ENCODE measurements at regions of chr18 and their contacts with region 1.

Region 1: DNA sequence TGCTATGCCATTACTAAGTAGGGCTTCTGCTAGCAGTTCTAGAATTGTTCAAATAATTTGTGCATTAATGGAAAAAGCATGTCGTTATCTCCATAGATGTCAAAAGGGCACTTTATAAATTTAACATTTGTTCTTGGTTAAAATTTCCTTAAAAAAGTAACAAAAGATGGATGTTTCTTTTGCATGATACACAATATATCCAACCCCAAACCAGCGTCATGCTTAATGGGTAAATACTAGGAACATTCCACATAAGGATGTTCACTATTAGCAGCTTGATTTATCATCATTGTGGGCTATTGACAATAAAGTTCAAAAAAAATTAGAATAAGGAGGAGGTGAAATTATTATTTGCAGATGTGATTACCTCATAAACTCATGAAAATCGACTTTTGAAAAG is 79.7 kb downstream of the GREB1L start:
- DNase-seq: no peak
- ATAC-seq: no peak
- H3K4me3 ChIP-seq: no peak overlapping the region
- H3K4me3 Mint-ChIP-seq: no peak overlapping the region
- H3K27ac ChIP-seq: no peak overlapping the region
- H3K27ac Mint-ChIP-seq: no peak overlapping the region
- H3K4me1 ChIP-seq: no peaks in the 10 kb centered on the region
- H3K4me1 Mint-ChIP-seq: no peaks in the 10 kb centered on the region
- H3K27me3 ChIP-seq: peaks cover 0 to 6% of the 10 kb centered on the region in 2 experiments
- H3K27me3 Mint-ChIP-seq: peaks cover 3 to 10% of the 10 kb centered on the region in 2 donors

Region 2: DNA sequence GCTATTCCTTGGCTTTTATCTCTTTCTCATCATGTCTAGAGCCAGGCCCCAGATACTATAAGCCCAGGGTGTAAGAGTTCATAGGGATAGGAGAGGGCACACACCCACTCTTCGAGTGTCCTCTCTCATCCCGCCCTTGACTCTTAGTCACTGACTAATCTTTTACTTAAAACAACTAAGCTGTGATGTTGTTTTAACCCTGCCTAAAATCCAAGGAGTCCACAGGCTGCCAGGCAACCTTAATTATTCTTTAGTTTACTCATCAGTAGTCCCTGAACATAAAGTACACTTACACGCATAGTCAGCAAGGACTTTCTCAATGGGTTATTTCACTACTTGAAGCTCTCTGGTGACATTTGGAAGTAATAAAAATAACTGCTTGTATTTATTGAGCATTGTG is 51.3 kb before region 1 on chr18:
- CTCF ChIA-PET with region 1: no interaction called
- POLR2A ChIA-PET with region 1: no interaction called
- DNase-seq: no peak
- ATAC-seq: no peak
- H3K4me3 ChIP-seq: no peak overlapping the region
- H3K4me3 Mint-ChIP-seq: no peak overlapping the region
- H3K27ac ChIP-seq: no peak overlapping the region
- H3K27ac Mint-ChIP-seq: no peak overlapping the region
- H3K4me1 ChIP-seq: no peaks in the 10 kb centered on the region
- H3K4me1 Mint-ChIP-seq: no peaks in the 10 kb centered on the region
- H3K27me3 ChIP-seq: peaks cover 0 to 2% of the 10 kb centered on the region in 2 experiments
- H3K27me3 Mint-ChIP-seq: peaks cover 1 to 8% of the 10 kb centered on the region in 2 donors

Region 3: DNA sequence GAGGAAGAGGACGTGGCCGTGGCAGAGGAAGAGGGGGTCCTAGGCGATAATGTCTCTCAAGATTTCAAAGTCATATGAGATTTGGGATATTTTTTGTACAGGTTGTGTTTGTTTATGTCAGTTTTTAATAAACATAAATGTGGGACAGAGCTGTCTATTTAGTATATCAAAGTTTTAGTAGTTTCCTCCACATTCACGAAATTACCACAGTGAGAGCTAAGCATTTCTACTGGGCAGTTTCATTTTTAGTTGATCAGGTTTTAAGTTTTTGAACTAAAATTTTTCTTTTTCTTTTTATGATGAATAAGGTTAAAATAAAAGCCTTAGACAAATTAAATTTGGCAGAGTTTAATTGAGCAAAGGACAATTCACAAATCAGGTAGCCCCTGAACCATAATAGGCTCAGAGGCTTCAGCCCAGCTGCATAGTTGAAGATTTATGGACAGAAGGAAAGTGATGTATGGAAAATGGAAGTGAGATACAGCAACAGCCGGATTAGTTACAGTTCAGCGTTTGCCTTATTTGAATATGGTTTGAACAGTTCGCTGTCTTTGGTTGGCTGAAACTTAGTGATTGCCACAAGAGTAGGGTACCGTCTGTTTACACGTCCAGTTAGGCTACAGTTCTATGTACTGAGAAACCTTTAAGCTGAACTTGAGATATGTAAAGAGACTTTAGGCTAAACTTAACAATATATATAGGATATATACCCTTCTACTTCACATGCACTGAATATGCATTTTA is 307.6 kb after region 1 on chr18:
- CTCF ChIA-PET with region 1: interaction called in 1 of 2 experiments, 12 read pairs
- POLR2A ChIA-PET with region 1: no interaction called
- DNase-seq: no peak
- ATAC-seq: no peak
- H3K4me3 ChIP-seq: no peak overlapping the region
- H3K4me3 Mint-ChIP-seq: peak overlapping the region in 1 of 3 donors; percentile 3
- H3K27ac ChIP-seq: peak overlapping the region; percentile 39
- H3K27ac Mint-ChIP-seq: peak overlapping the region; percentile 68 to 79
- H3K4me1 ChIP-seq: peaks cover 3 to 6% of the 10 kb centered on the region in 2 experiments
- H3K4me1 Mint-ChIP-seq: peaks cover 18 to 22% (median 19%) of the 10 kb centered on the region in 3 donors
- H3K27me3 ChIP-seq: no peaks in the 10 kb centered on the region
- H3K27me3 Mint-ChIP-seq: no peaks in the 10 kb centered on the region